GM12878 (cell line): ENCODE measurements at regions of chr2 and their contacts with region 1.

Region 1: GRCh38 chr2:3423492-3424175 is 44.1 kb downstream of the TRAPPC12 start:
- DNase-seq: peak; percentile 8
- ATAC-seq: peak; percentile 89
- H3K4me3 ChIP-seq: no peak overlapping the region
- H3K27ac ChIP-seq: no peak overlapping the region
- H3K4me1 ChIP-seq: peaks cover 12% of the 10 kb centered on the region
- H3K27me3 ChIP-seq: no peaks in the 10 kb centered on the region
- CTCF ChIP-seq: peak; percentile 77 to 99 (median 98)
- EP300 ChIP-seq: no peak
- POLR2A ChIP-seq: no peak
- RAD21 ChIP-seq: peak; percentile 53

Region 2: GRCh38 chr2:3379647-3380534 is 43.7 kb before region 1 on chr2 and contains the start of gene TRAPPC12:
- CTCF ChIA-PET with region 1: interaction called, 21 read pairs
- POLR2A ChIA-PET with region 1: interaction called, 3 read pairs
- RAD21 ChIA-PET with region 1: interaction called, 7 read pairs
- SMC1A ChIA-PET with region 1: interaction called, 3 read pairs
- in situ Hi-C with region 1: no loop called
- intact Hi-C with region 1: no loop called
- DNase-seq: peak; percentile 69
- ATAC-seq: peak; percentile 87
- H3K4me3 ChIP-seq: peak within 1 kb of the TSS; percentile 77
- H3K27ac ChIP-seq: peak within 1 kb of the TSS; percentile 86
- H3K4me1 ChIP-seq: peaks cover 11% of the 10 kb centered on the region
- H3K27me3 ChIP-seq: no peaks in the 10 kb centered on the region
- CTCF ChIP-seq: peak; percentile 39 to 55 (median 47)
- EP300 ChIP-seq: no peak
- POLR2A ChIP-seq: peak; percentile 99
- RAD21 ChIP-seq: 0 out of 2 replicates have a peak, but pooled peaks have one; percentile 13
- polyA plus RNA-seq, gene TRAPPC12: 8.6 to 22.9 TPM

Region 3: DNA sequence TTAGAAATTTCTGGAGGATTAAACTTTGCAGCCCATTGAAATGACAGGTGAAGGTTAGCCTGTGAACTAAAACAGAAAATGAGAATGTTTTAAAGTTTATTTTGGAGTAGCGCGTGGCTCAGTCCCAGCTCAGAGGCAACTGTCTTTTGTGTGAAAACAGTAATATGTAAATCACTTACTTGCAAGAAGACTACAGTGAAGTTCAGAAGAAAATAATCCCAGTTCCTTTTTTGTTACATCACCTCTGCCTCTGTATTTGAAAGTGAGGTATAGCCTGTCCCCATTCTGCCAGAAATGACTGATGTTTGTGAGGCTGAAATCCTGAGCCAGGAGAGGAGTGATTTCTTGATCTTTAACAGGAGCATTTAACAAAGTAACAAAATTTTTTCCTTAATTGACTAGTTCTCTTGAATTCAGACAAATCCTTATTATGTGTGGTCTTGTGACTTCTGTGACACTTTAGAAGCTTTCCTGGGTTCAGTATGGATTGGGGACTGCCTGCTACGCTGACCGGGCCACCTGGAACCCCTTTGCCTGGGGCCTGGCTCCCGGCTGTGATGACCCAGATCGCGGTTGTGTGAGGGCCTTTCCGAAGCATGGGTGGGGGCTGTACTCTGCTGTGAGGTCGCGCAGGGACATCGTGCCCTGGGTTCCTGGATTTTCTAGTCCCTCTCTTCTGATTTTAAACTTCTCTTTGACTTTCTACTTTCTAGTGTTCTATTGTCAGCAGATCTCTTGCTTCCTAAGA is 19.9 kb before region 1 on chr2:
- CTCF ChIA-PET with region 1: interaction called, 9 read pairs
- POLR2A ChIA-PET with region 1: no interaction called
- RAD21 ChIA-PET with region 1: interaction called, 7 read pairs
- SMC1A ChIA-PET with region 1: interaction called, 12 read pairs
- in situ Hi-C with region 1: no loop called
- intact Hi-C with region 1: no loop called
- DNase-seq: peak; percentile 66
- ATAC-seq: peak; percentile 99
- H3K4me3 ChIP-seq: no peak overlapping the region
- H3K27ac ChIP-seq: peak overlapping the region; percentile 79
- H3K4me1 ChIP-seq: peaks cover 18% of the 10 kb centered on the region
- H3K27me3 ChIP-seq: no peaks in the 10 kb centered on the region
- CTCF ChIP-seq: no peak
- EP300 ChIP-seq: peak; percentile 71 to 78; a peak in 2 of 4 replicates
- POLR2A ChIP-seq: no peak
- RAD21 ChIP-seq: 0 out of 2 replicates have a peak, but pooled peaks have one; percentile 10

Region 4: DNA sequence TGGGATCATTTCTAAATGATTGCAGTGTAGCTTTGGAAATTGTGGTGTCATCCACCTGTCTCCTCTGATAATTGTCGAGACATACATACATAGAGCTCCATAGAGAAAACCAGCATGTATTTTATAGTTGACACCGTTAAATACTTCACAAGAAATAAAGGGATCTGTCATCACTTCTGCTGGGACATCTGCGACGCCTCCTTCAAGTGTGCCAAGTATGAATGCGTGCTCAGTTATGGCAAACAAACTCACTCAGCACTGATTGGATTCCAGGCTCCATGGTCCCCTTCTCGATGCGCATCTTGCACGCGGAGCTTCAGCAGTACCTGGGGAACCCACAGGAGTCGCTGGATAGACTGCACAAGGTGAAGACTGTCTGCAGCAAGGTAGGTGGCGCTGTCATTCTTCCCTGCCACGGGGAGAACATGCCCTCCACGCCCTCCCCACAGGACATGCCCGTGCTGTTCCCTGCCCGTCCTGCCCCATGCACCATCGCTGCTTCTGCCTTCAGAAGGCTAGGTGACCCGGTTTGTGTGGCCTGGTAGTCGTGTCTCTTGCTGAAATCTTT is 20.0 kb after region 1 on chr2:
- CTCF ChIA-PET with region 1: interaction called, 46 read pairs
- POLR2A ChIA-PET with region 1: interaction called, 3 read pairs
- RAD21 ChIA-PET with region 1: interaction called, 4 read pairs
- SMC1A ChIA-PET with region 1: interaction called, 8 read pairs
- in situ Hi-C with region 1: no loop called
- intact Hi-C with region 1: no loop called
- DNase-seq: no peak
- ATAC-seq: no peak
- H3K4me3 ChIP-seq: no peak overlapping the region
- H3K27ac ChIP-seq: no peak overlapping the region
- H3K4me1 ChIP-seq: no peaks in the 10 kb centered on the region
- H3K27me3 ChIP-seq: no peaks in the 10 kb centered on the region
- CTCF ChIP-seq: no peak; a peak in 1 of 6 replicates
- EP300 ChIP-seq: no peak
- POLR2A ChIP-seq: no peak
- RAD21 ChIP-seq: no peak